GM18951 (cell line): ENCODE measurements at regions of chr5 and their contacts with region 1.

Region 1: GRCh38 chr5:143229896-143230675 is 173.4 kb downstream of the NR3C1 start:
- POLR2A ChIP-seq: peak; percentile 36

Region 2: GRCh38 chr5:142472300-142472951 is 757.7 kb before region 1 on chr5:
- in situ Hi-C with region 1: no loop called
- POLR2A ChIP-seq: no peak

Region 3: GRCh38 chr5:143182901-143183820 is 46.9 kb before region 1 on chr5:
- in situ Hi-C with region 1: loop called (anchors 5 kb)
- POLR2A ChIP-seq: peak; percentile 36